ENCODE measurements at regions of chr21 and their contacts with region 1.

Region 1: GRCh38 chr21:33479679-33480480 is at the start of gene TMEM50B:
- DNase-seq: peak; percentile 95
- ATAC-seq: peak; percentile 92
- H3K4me3 ChIP-seq: peak within 1 kb of the TSS; percentile 79
- H3K27ac ChIP-seq: peak within 1 kb of the TSS; percentile 67
- H3K4me1 ChIP-seq: no peaks in the 10 kb centered on the region; the same call in 1 of the 2 replicates
- H3K27me3 ChIP-seq: no peaks in the 10 kb centered on the region
- CTCF ChIP-seq: peak; percentile 38; the same call in 1 of the 2 replicates
- total RNA-seq, gene TMEM50B: 21.5 and 25.5 TPM in 2 replicates

Region 2: GRCh38 chr21:33360881-33361602 is 118.8 kb before region 1 on chr21:
- CTCF ChIA-PET with region 1: interaction called, 14 read pairs
- POLR2A ChIA-PET with region 1: interaction called, 6 read pairs
- intact Hi-C with region 1: no loop called
- DNase-seq: peak; percentile 84
- ATAC-seq: peak; percentile 87
- H3K4me3 ChIP-seq: peak overlapping the region; percentile 32
- H3K27ac ChIP-seq: peak overlapping the region; percentile 68
- H3K4me1 ChIP-seq: peaks cover 23% of the 10 kb centered on the region
- H3K27me3 ChIP-seq: no peaks in the 10 kb centered on the region
- CTCF ChIP-seq: peak; percentile 87

Region 3: DNA sequence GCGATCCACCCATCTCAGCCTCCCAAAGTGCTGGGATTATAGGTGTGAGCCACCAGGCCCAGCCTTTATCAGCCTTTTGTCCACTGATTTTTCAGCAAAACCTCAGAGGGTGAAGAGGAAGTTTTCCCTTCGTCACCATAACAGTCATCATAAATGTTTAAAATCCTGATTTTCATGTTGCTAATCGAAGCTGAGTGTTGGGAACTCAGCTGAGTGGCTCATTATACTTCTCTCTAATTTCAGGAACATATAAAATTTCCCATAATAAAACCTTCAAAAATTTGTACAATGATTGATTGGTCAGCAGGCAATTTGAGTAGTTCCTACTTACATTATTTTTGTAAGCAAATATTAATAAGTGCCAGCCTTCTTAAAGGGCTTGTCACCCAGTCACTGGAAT is 108.5 kb before region 1 on chr21:
- CTCF ChIA-PET with region 1: no interaction called
- POLR2A ChIA-PET with region 1: no interaction called
- intact Hi-C with region 1: no loop called
- DNase-seq: no peak
- ATAC-seq: no peak
- H3K4me3 ChIP-seq: no peak overlapping the region
- H3K27ac ChIP-seq: no peak overlapping the region
- H3K4me1 ChIP-seq: peaks cover 25% of the 10 kb centered on the region
- H3K27me3 ChIP-seq: no peaks in the 10 kb centered on the region
- CTCF ChIP-seq: no peak

Region 4: DNA sequence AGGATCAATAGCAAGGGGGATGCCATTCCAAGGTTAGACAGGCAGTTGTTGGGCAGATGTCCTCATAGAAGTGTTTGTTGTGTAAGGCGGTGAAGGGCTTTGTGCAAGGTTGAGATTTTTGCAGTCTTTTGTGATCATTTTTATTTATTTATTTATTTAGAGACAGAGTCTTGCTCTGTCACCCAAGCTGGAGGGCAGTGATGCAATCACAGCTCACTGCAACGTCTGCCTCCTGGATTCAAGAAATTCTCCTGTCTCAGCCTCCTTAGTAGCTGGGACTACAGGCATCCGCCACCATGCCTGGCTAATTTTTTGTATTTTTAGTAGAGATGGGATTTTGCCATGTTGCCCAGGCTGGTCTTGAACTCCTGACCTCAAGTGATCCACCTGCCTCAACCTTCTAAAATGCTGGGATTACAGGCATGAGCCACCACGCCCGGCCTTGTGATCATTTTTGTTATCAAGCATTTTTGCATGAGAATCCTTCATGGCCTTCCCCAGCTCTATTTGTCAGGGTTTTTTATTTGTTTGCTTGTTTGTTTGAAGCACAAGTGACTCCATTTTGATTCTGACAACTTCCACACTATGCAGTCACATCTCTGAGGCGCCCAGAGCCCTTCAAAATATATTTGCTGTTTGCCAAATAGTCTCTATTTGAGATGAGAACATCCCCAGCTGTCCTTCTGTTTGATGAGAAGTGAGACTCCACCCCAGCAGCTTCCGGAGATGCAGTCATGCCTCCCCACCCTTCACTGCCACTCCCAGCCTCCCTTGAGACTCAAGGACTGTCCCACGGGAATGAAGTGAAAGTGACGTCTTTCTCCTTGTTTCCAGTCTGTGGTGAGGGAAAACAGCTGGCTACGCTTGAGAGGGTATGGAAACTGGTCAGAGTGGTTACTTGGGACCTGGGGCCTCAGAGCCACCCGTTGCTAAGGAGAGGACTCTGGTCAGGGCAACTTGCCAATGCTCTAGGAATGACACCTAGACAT is 38.1 kb before region 1 on chr21:
- CTCF ChIA-PET with region 1: interaction called, 19 read pairs
- POLR2A ChIA-PET with region 1: interaction called, 4 read pairs
- intact Hi-C with region 1: no loop called
- DNase-seq: peak; percentile 91
- ATAC-seq: peak; percentile 92
- H3K4me3 ChIP-seq: no peak overlapping the region
- H3K27ac ChIP-seq: peak overlapping the region; percentile 93
- H3K4me1 ChIP-seq: peaks cover 21% of the 10 kb centered on the region
- H3K27me3 ChIP-seq: no peaks in the 10 kb centered on the region
- CTCF ChIP-seq: no peak

Region 5: GRCh38 chr21:33458861-33459260 is 21.0 kb before region 1 on chr21:
- CTCF ChIA-PET with region 1: interaction called, 3 read pairs
- POLR2A ChIA-PET with region 1: interaction called, 23 read pairs
- intact Hi-C with region 1: no loop called
- DNase-seq: no peak
- ATAC-seq: no peak
- H3K4me3 ChIP-seq: no peak overlapping the region
- H3K27ac ChIP-seq: no peak overlapping the region
- H3K4me1 ChIP-seq: no peaks in the 10 kb centered on the region
- H3K27me3 ChIP-seq: no peaks in the 10 kb centered on the region
- CTCF ChIP-seq: no peak

Region 6: DNA sequence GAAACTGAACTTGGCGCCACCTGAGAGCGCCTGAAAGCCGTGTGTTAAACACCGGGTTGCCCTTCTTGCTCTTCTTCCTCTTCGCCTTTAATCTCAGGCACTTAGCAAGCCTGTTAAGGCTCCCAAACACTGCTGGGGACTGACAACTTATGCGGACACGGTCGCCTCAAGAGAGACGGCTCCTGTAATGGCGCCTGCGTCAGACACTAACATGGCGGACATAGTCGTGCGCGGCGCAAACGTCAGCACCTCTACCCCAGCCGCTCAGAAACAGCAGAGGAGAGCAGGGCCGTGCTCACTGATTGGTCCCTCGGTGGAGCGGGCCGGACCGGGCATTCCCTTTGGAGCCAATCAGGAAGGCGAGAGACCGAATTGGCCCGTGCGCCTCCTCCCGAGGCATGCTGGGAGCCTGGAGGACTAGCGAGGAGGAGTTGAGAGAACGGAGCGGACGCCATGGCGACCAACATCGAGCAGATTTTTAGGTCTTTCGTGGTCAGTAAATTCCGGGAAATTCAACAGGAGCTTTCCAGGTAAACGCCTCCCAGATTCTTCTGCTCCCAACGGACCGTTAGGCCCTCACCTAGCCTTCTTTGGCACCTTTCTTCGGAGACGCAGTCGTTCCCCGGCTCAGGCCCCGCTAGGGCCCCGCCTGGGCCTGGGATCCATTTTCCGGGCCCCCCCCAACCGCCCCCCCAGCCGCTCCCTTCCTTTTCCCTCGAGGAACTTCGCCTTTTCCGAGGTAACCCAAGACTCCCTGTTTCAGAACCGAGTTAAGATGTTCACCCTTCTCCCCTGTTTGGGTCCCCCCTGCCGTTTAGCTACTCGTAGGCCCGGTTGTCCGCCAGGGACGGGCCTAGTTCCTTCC is 63.0 kb after region 1 on chr21 and contains the start of gene SON:
- CTCF ChIA-PET with region 1: interaction called, 4 read pairs
- POLR2A ChIA-PET with region 1: interaction called, 11 read pairs
- intact Hi-C with region 1: loop called (anchors 5 kb)
- DNase-seq: peak; percentile 99
- ATAC-seq: peak; percentile 95
- H3K4me3 ChIP-seq: peak within 1 kb of the TSS; percentile 94
- H3K27ac ChIP-seq: peak within 1 kb of the TSS; percentile 98
- H3K4me1 ChIP-seq: peaks cover 22% of the 10 kb centered on the region
- H3K27me3 ChIP-seq: no peaks in the 10 kb centered on the region
- CTCF ChIP-seq: no peak
- total RNA-seq, gene SON: 180 and 373 TPM in 2 replicates

Region 7: DNA sequence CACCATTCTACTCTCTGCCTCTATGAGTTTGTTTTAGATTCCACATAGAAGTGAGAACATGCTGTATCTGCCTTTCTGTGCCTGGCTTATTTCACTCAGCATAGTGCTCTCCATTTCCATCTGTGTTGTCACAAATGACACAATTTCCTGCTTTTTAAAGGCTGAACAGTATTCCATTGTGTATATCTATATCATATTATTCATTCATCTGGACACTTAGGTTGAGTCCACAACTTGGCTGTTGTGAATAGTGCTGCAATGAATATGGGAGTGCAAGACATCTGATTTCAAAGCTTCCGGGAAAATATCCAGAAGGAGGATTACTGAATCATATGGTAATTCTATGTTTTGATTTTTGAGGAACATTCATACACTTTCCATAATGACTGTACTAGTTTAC is 128.7 kb after region 1 on chr21:
- CTCF ChIA-PET with region 1: interaction called, 16 read pairs
- POLR2A ChIA-PET with region 1: no interaction called
- intact Hi-C with region 1: no loop called
- DNase-seq: no peak
- ATAC-seq: peak; percentile 51
- H3K4me3 ChIP-seq: no peak overlapping the region
- H3K27ac ChIP-seq: no peak overlapping the region
- H3K4me1 ChIP-seq: peaks cover 5% of the 10 kb centered on the region
- H3K27me3 ChIP-seq: no peaks in the 10 kb centered on the region
- CTCF ChIP-seq: no peak

Region 8: DNA sequence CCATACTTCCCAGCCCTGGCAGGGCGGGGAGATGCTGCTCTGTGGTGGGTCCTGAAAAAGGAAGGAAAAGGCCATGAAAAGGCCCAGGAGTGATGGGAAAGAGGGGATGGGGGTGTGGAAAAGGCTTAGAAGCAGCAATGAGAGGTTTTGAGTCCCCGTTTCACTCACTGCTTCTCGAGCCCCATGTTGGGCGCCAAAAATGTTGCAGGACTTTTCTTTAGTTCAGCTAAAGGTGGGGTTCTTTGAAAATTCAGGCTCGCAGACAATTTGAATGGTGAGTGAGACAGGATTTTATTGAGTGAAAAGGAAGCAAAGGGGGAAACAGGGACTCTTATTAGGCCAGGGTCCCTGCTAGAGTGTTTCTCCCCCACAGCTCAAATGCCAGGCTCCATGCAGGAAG is 686.6 kb after region 1 on chr21:
- CTCF ChIA-PET with region 1: no interaction called
- POLR2A ChIA-PET with region 1: no interaction called
- intact Hi-C with region 1: no loop called
- DNase-seq: no peak
- ATAC-seq: no peak
- H3K4me3 ChIP-seq: no peak overlapping the region
- H3K27ac ChIP-seq: no peak overlapping the region
- H3K4me1 ChIP-seq: no peaks in the 10 kb centered on the region
- H3K27me3 ChIP-seq: no peaks in the 10 kb centered on the region
- CTCF ChIP-seq: no peak

Measured in PC-3 (cell line).